ENCODE measurements at regions of chr15 and their contacts with region 1.

Region 1: GRCh38 chr15:78314181-78314581 is 14.8 kb upstream of the SKIC8 start:
- DNase-seq: no peak
- ATAC-seq: no peak
- H3K4me3 ChIP-seq: no peak overlapping the region
- H3K27ac ChIP-seq: no peak overlapping the region
- H3K4me1 ChIP-seq: no peaks in the 10 kb centered on the region
- H3K27me3 ChIP-seq: no peaks in the 10 kb centered on the region
- CTCF ChIP-seq: no peak

Region 2: DNA sequence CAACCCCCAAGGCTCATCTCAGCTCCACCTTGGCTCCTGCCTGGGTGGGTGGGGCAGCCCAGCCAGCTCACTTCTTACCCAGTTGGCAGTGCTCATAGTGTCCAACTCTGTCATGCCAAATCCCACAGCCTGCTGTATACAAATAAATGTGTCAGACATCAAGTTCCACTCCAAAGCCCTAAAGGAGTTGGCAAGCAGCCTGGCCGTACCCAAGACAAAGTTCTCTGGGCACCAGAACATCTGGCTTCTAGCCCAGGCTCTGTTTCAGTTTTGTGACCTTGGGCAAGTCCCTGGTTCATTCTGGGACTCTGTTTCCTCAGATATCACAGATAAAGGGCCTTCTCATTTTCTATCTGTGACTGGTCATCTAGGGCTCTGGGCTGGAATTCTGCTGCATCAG is 97.5 kb before region 1 on chr15:
- intact Hi-C with region 1: no loop called
- DNase-seq: peak in 1 of 4 donors; percentile 79
- ATAC-seq: peak; percentile 93
- H3K4me3 ChIP-seq: no peak overlapping the region
- H3K27ac ChIP-seq: no peak overlapping the region
- H3K4me1 ChIP-seq: no peaks in the 10 kb centered on the region
- H3K27me3 ChIP-seq: peaks cover 0 to 3% of the 10 kb centered on the region in 2 donors
- CTCF ChIP-seq: no peak

Region 3: GRCh38 chr15:78422571-78423340 is 108.6 kb after region 1 on chr15:
- intact Hi-C with region 1: loop called in 1 of 2 experiments (anchors 5 kb)
- DNase-seq: peak; percentile 48 to 80 (median 62)
- ATAC-seq: peak; percentile 97
- H3K4me3 ChIP-seq: no peak overlapping the region
- H3K27ac ChIP-seq: no peak overlapping the region
- H3K4me1 ChIP-seq: peaks cover 0 to 10% of the 10 kb centered on the region in 2 donors
- H3K27me3 ChIP-seq: no peaks in the 10 kb centered on the region
- CTCF ChIP-seq: peak; percentile 85 to 91

Region 4: DNA sequence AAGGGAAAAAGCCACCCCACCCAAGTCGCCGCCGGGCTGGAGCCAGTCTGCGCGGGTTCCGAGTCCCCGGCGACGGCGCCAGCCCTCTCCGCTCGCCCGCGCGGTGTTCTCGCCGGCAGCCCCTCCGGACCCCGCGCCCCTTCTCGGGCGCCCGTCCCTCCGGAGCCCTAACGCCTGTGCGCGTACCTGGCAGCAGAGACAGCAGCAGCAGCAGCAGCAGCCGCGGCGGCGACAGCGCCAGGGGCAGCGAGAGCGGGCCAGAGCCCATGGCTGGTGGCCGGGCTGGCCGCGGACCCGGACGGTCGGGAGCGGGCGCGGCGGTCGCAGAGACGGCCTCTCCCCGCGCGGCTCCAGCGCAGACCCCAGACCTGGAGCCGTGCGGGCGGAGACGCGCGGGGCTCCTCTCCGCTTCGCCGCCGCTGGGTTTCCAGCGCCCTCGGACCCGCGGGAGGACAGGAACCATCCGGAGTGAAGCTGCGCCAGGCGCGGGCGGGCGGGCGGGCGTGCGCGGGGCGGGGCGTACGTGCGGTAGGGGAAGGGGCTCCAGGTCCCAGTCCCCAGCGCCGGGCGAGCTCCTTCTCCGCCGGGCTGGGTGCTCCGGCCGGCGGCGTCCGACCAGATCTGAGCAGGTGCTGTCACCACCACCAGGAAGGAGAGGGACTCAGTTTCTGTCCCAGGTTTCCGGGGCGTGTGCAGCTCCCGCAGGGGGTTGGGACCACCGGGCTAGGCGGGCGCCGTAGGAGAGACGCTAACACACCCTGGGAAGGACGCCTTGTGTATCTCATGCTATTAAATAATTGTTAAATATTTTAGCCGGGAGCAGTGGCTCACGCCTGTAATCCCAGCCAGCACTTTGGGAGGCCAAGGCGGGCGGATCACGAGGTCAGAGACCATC is 306.6 kb after region 1 on chr15 and contains the start of gene CHRNA3:
- intact Hi-C with region 1: no loop called
- DNase-seq: peak in 1 of 4 donors; percentile 7
- ATAC-seq: no peak
- H3K4me3 ChIP-seq: no peak within 1 kb of the TSS
- H3K27ac ChIP-seq: no peak within 1 kb of the TSS
- H3K4me1 ChIP-seq: peaks cover 0 to 15% of the 10 kb centered on the region in 2 donors
- H3K27me3 ChIP-seq: peaks cover 45 to 65% of the 10 kb centered on the region in 2 donors
- CTCF ChIP-seq: no peak
- polyA plus RNA-seq, gene CHRNA3: 0.10 to 0.27 (median 0.21) TPM

Measured in left lung (tissue), 14 donors.